CD4-positive, alpha-beta memory T cell (primary cell): ENCODE measurements at regions of chr10 and their contacts with region 1.

Region 1: GRCh38 chr10:104121520-104122224 is at the start of gene SFR1:
- DNase-seq: peak; percentile 99 to 100 (median 99)
- H3K4me3 ChIP-seq: peak within 1 kb of the TSS; percentile 80 to 98
- H3K4me3 Mint-ChIP-seq: peak within 1 kb of the TSS; percentile 94 to 98 (median 96)
- H3K27ac ChIP-seq: peak within 1 kb of the TSS; percentile 100
- H3K27ac Mint-ChIP-seq: peak within 1 kb of the TSS; percentile 99 to 100 (median 100)
- H3K4me1 ChIP-seq: peaks cover 21% of the 10 kb centered on the region
- H3K4me1 Mint-ChIP-seq: peaks cover 9 to 40% (median 20%) of the 10 kb centered on the region in 4 donors
- H3K27me3 ChIP-seq: no peaks in the 10 kb centered on the region
- H3K27me3 Mint-ChIP-seq: peaks cover 0 to 4% of the 10 kb centered on the region in 2 donors
- total RNA-seq, gene SFR1: 12.2 to 12.4 TPM

Region 2: GRCh38 chr10:103528556-103528955 is 593.1 kb before region 1 on chr10:
- CTCF ChIA-PET with region 1: no interaction called
- POLR2A ChIA-PET with region 1: no interaction called
- intact Hi-C with region 1: no loop called
- DNase-seq: no peak
- H3K4me3 ChIP-seq: no peak overlapping the region
- H3K4me3 Mint-ChIP-seq: no peak overlapping the region
- H3K27ac ChIP-seq: no peak overlapping the region
- H3K27ac Mint-ChIP-seq: no peak overlapping the region
- H3K4me1 ChIP-seq: no peaks in the 10 kb centered on the region
- H3K4me1 Mint-ChIP-seq: no peaks in the 10 kb centered on the region
- H3K27me3 ChIP-seq: no peaks in the 10 kb centered on the region
- H3K27me3 Mint-ChIP-seq: peaks cover 7 to 15% of the 10 kb centered on the region in 2 donors

Region 3: DNA sequence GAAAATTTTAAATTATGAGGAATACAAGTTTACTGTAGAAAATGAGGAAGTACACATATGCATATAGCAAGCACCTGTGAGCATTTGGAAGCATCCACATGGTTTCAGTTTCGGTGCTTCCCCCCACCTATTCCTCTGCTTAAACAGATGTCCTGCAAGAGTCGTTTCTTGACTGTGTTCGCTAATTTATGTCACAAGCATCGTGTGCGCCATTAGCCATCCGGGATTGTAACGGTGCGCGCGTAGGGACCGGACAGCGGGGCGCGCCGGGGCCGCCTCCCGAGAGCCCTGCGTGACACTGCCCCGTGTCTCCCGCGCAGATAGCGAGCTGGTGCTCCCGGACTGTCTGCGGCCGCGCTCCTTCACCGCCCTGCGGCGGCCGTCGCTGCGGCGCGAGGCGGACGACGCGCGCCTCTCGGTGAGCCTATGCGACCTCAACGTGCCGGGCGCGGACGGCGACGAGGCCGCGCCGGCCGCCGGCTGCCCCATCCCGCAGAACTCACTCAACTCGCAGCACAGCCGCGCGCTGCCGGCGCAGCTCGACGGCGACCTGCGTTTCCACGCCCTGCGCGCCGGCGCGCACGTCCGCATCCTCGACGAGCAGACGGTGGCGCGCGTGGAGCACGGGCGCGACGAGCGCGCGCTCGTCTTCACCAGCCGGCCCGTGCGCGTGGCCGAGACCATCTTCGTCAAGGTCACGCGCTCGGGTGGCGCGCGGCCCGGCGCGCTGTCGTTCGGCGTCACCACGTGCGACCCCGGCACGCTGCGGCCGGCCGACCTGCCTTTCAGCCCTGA is 537.3 kb before region 1 on chr10:
- CTCF ChIA-PET with region 1: interaction called, 4 read pairs
- POLR2A ChIA-PET with region 1: interaction called, 22 read pairs
- intact Hi-C with region 1: loop called (anchors 1 kb)
- DNase-seq: peak; percentile 60 to 75 (median 66)
- H3K4me3 ChIP-seq: peak overlapping the region; percentile 63 to 70
- H3K4me3 Mint-ChIP-seq: peak overlapping the region; percentile 89 to 96 (median 92)
- H3K27ac ChIP-seq: peak overlapping the region; percentile 62
- H3K27ac Mint-ChIP-seq: peak overlapping the region; percentile 88 to 99 (median 93)
- H3K4me1 ChIP-seq: peaks cover 15% of the 10 kb centered on the region
- H3K4me1 Mint-ChIP-seq: peaks cover 7 to 25% (median 16%) of the 10 kb centered on the region in 4 donors
- H3K27me3 ChIP-seq: no peaks in the 10 kb centered on the region
- H3K27me3 Mint-ChIP-seq: no peaks in the 10 kb centered on the region

Region 4: GRCh38 chr10:103895411-103896186 is 226.1 kb before region 1 on chr10:
- CTCF ChIA-PET with region 1: interaction called, 59 read pairs
- POLR2A ChIA-PET with region 1: interaction called, 30 read pairs
- intact Hi-C with region 1: no loop called
- DNase-seq: no peak
- H3K4me3 ChIP-seq: no peak overlapping the region
- H3K4me3 Mint-ChIP-seq: peak overlapping the region in 4 of 8 donors; percentile 11 to 87 (median 48)
- H3K27ac ChIP-seq: peak overlapping the region; percentile 11
- H3K27ac Mint-ChIP-seq: peak overlapping the region; percentile 38 to 95 (median 86)
- H3K4me1 ChIP-seq: peaks cover 40% of the 10 kb centered on the region
- H3K4me1 Mint-ChIP-seq: peaks cover 39 to 64% (median 51%) of the 10 kb centered on the region in 4 donors
- H3K27me3 ChIP-seq: no peaks in the 10 kb centered on the region
- H3K27me3 Mint-ChIP-seq: no peaks in the 10 kb centered on the region

Region 5: GRCh38 chr10:103918053-103918846 is 203.4 kb before region 1 on chr10 and contains the start of gene STN1:
- CTCF ChIA-PET with region 1: no interaction called
- POLR2A ChIA-PET with region 1: interaction called, 55 read pairs
- intact Hi-C with region 1: loop called (anchors 1 kb)
- DNase-seq: peak; percentile 93 to 96 (median 95)
- H3K4me3 ChIP-seq: peak within 1 kb of the TSS; percentile 69 to 95
- H3K4me3 Mint-ChIP-seq: peak within 1 kb of the TSS; percentile 92 to 99 (median 96)
- H3K27ac ChIP-seq: peak within 1 kb of the TSS; percentile 82
- H3K27ac Mint-ChIP-seq: peak within 1 kb of the TSS; percentile 91 to 98 (median 95)
- H3K4me1 ChIP-seq: peaks cover 53% of the 10 kb centered on the region
- H3K4me1 Mint-ChIP-seq: peaks cover 18 to 50% (median 30%) of the 10 kb centered on the region in 4 donors
- H3K27me3 ChIP-seq: no peaks in the 10 kb centered on the region
- H3K27me3 Mint-ChIP-seq: no peaks in the 10 kb centered on the region
- total RNA-seq, gene STN1: 30.4 to 31.6 TPM

Region 6: GRCh38 chr10:103983367-103983911 is 138.2 kb before region 1 on chr10:
- CTCF ChIA-PET with region 1: interaction called, 4 read pairs
- POLR2A ChIA-PET with region 1: interaction called, 10 read pairs
- intact Hi-C with region 1: no loop called
- DNase-seq: peak; percentile 35 to 40 (median 37)
- H3K4me3 ChIP-seq: peak overlapping the region in 1 of 2 donors; percentile 34
- H3K4me3 Mint-ChIP-seq: peak overlapping the region; percentile 57 to 89 (median 76)
- H3K27ac ChIP-seq: peak overlapping the region; percentile 43
- H3K27ac Mint-ChIP-seq: peak overlapping the region; percentile 65 to 94 (median 76)
- H3K4me1 ChIP-seq: peaks cover 70% of the 10 kb centered on the region
- H3K4me1 Mint-ChIP-seq: peaks cover 52 to 79% (median 65%) of the 10 kb centered on the region in 4 donors
- H3K27me3 ChIP-seq: no peaks in the 10 kb centered on the region
- H3K27me3 Mint-ChIP-seq: no peaks in the 10 kb centered on the region

Region 7: DNA sequence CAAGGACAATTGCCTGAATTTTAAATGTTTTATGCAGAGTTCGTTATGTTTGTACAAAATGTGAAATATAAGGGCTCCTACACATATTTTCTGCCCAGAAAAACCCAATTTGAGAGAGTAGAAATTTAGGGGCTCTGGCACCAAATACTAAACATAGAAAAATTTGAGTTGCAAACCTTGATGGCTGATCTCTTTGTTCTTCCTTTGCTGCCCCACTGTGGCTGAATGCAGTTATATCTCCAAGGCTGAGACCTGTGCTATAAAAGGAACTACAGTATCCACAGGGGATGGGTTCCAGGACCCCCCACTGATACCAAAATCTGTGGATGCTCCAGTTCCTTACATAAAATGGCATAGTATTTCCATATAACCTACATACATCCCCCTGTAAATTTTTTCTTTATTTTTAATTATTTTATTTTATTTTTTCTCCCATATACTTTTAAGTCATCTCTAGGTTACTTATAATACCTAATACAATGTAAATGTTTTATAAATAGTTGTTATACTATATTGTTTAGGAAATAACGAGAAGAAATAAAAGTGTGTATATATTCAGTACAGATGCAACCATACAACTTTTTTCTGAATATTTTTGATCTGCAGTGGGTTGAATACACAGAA is 88.0 kb after region 1 on chr10:
- CTCF ChIA-PET with region 1: no interaction called
- POLR2A ChIA-PET with region 1: no interaction called
- intact Hi-C with region 1: loop called (anchors 5 kb)
- DNase-seq: peak; percentile 38 to 55 (median 42)
- H3K4me3 ChIP-seq: no peak overlapping the region
- H3K4me3 Mint-ChIP-seq: no peak overlapping the region
- H3K27ac ChIP-seq: no peak overlapping the region
- H3K27ac Mint-ChIP-seq: no peak overlapping the region
- H3K4me1 ChIP-seq: no peaks in the 10 kb centered on the region
- H3K4me1 Mint-ChIP-seq: no peaks in the 10 kb centered on the region
- H3K27me3 ChIP-seq: no peaks in the 10 kb centered on the region
- H3K27me3 Mint-ChIP-seq: peaks cover 7 to 16% of the 10 kb centered on the region in 2 donors

Region 8: DNA sequence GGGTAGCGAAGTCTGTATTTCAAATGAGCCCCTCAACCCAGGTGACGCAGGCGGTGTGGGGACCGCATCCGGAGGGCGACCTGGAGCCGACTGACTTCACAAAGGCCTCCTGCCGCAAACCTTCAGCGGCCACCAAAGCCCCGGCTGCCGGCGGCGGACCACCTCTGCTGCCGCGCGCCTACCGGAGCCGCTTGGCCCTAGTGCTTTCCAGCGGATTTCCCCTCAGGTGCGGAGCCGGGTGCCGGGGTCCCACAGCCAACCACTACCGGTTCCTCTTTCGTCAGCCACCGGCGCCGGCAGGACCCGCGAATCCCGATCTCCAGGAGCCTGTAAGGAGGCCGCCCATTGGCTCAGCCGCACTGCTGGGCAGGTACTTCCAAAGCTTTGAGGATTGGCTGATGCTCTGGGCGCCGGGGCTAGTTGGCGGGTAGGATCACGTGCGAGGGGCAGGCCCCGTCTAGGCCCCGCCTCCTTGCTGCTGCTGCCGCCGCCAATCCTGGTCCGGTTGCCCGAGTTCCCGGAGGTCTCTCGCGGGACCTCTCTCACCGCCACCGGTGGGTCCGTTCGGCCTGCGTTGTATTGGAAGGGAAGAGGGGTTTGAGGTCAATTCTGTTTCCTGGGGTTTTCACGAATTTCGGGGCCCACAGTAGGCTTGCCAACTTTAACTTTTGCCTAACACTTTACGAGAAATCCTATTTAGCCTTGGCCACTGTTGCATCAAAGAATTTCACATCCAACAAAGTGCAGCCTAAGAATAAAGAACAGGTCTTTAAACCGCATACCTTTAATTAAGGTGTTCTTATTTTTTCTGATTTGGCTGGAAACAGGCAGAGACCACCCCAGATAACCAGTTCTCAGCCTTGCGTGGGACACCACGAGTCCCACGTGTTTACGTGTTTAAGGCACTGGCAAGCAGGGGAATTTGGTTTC is 147.3 kb after region 1 on chr10 and contains the start of gene GSTO2:
- CTCF ChIA-PET with region 1: no interaction called
- POLR2A ChIA-PET with region 1: interaction called, 13 read pairs
- intact Hi-C with region 1: loop called (anchors 2 kb)
- DNase-seq: peak; percentile 97 to 100 (median 99)
- H3K4me3 ChIP-seq: peak within 1 kb of the TSS; percentile 67 to 89
- H3K4me3 Mint-ChIP-seq: peak within 1 kb of the TSS; percentile 91 to 96 (median 92)
- H3K27ac ChIP-seq: peak within 1 kb of the TSS; percentile 90
- H3K27ac Mint-ChIP-seq: peak within 1 kb of the TSS; percentile 91 to 99 (median 96)
- H3K4me1 ChIP-seq: peaks cover 49% of the 10 kb centered on the region
- H3K4me1 Mint-ChIP-seq: peaks cover 28 to 56% (median 39%) of the 10 kb centered on the region in 4 donors
- H3K27me3 ChIP-seq: no peaks in the 10 kb centered on the region
- H3K27me3 Mint-ChIP-seq: no peaks in the 10 kb centered on the region
- total RNA-seq, gene GSTO2: 1.6 to 2.3 TPM